Activated CD4-positive, alpha-beta T cell treated with anti-CD3 and anti-CD28 coated beads for 36 hours (primary cell): ENCODE measurements at regions of chr16 and their contacts with region 1.

Region 1: DNA sequence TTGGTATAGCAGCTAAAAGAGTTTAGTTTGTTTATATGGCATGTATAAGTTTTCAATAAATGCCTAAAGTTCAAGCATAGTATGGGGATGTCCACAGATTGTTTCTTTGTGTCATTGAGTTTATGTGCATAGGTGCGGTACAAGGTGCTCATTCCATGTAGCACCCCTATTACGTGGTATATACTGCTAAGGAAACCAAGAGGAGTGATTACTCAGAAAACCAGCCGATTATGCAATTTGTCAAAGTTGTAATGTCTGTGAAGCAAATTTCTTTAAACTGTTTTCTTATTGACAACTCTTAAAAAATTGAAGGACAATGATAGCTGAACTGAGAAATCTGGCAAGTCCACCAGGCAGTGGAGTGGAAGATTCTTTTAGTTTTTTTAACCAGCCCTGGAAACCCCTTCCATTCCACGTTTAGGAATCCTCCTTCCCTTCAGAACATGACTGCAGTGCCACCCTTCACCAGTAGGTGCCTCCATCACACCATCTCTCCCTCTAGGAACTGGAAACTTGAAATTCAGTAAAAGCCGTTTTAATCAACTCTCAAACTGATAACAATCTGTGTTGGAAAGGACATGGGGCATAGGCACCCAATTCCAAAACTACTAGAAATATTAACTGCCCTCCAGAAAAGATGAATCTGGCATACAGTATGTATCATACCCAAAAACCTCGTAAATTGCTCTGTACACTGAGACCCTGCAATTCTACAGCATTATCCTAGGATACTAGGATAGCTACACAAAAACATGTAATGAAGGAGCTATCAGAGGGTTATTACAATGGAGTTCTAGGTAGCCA is 43.5 kb downstream of the REXO5 start:
- DNase-seq: peak; percentile 78
- ATAC-seq: peak; percentile 57
- H3K4me3 Mint-ChIP-seq: no peak overlapping the region
- H3K27ac Mint-ChIP-seq: no peak overlapping the region
- H3K4me1 Mint-ChIP-seq: peaks cover 13% of the 10 kb centered on the region
- H3K27me3 Mint-ChIP-seq: no peaks in the 10 kb centered on the region

Region 2: GRCh38 chr16:20866145-20866772 is 16.5 kb after region 1 on chr16:
- CTCF ChIA-PET with region 1: interaction called, 16 read pairs
- POLR2A ChIA-PET with region 1: no interaction called
- intact Hi-C with region 1: no loop called
- DNase-seq: peak; percentile 38
- ATAC-seq: peak; percentile 74
- H3K4me3 Mint-ChIP-seq: no peak overlapping the region
- H3K27ac Mint-ChIP-seq: peak overlapping the region; percentile 61
- H3K4me1 Mint-ChIP-seq: peaks cover 17% of the 10 kb centered on the region
- H3K27me3 Mint-ChIP-seq: no peaks in the 10 kb centered on the region

Region 3: DNA sequence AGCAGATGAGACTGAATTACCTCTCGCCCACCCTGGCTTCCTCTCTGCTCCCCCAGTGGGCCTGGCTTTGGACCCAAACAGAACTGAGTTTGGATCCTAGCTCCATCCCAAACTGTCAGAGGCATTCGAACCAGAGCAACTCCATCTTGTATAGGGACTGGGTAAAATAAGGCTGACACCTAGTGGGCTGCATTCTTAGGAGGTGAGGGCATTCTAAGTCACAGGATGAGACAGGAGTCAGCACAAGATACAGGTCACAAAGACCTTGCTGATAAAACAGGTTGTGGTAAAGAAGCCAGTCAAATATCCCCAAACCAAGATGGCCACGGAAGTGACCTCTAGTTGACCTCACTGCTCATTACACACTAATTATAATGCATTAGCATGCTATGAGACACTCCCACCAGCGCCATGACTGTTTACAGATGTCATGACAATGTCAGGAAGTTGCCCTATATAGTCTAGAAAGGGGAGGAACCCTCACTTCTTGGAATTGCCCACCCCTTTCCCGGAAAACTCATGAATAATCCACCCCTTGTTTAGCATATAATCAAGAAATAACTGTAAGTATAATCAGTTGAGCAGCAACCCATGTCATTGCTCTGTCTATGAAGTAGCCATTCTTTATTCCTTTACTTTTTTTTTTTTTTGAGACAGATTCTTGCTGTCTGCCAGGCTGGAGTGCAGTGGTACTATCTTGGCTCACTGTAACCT is 95.2 kb after region 1 on chr16:
- CTCF ChIA-PET with region 1: interaction called, 8 read pairs
- POLR2A ChIA-PET with region 1: no interaction called
- intact Hi-C with region 1: loop called (anchors 1 kb)
- DNase-seq: peak; percentile 78
- ATAC-seq: peak; percentile 78
- H3K4me3 Mint-ChIP-seq: no peak overlapping the region
- H3K27ac Mint-ChIP-seq: peak overlapping the region; percentile 55
- H3K4me1 Mint-ChIP-seq: peaks cover 33% of the 10 kb centered on the region
- H3K27me3 Mint-ChIP-seq: no peaks in the 10 kb centered on the region

Region 4: GRCh38 chr16:21001262-21001661 is 151.5 kb after region 1 on chr16:
- CTCF ChIA-PET with region 1: interaction called, 11 read pairs
- POLR2A ChIA-PET with region 1: no interaction called
- intact Hi-C with region 1: loop called (anchors 1 to 5 kb)
- DNase-seq: peak; percentile 62
- ATAC-seq: no peak
- H3K4me3 Mint-ChIP-seq: no peak overlapping the region
- H3K27ac Mint-ChIP-seq: no peak overlapping the region
- H3K4me1 Mint-ChIP-seq: no peaks in the 10 kb centered on the region
- H3K27me3 Mint-ChIP-seq: peaks cover 7% of the 10 kb centered on the region

Region 5: DNA sequence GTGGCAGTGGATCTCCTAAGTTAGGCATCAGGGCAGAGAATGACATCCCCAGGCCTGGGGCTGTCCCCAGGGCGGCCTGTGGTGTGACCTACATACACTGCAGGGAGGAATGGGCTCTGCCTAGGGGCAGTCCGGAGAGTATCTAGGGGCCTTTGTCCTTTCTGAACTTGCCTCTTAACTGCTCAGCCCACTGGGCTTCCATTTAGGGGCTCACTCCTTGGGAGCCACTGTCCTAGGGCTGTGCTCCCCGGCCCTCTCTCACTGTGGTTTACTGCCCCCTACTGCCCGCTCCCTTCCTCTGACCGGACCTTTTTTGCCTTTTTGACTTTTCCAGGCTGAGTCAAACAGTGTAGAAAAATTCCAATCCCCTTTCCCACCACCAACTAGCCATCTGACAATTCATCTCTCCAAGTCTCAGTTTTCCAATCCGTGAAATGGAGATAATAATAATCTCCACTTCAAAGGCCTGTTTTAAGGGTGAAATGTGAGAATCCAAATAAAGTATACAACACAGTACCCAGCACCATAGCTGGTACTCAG is 234.0 kb after region 1 on chr16:
- CTCF ChIA-PET with region 1: interaction called, 15 read pairs
- POLR2A ChIA-PET with region 1: no interaction called
- intact Hi-C with region 1: loop called (anchors 1 kb)
- DNase-seq: peak; percentile 75
- ATAC-seq: peak; percentile 63
- H3K4me3 Mint-ChIP-seq: no peak overlapping the region
- H3K27ac Mint-ChIP-seq: no peak overlapping the region
- H3K4me1 Mint-ChIP-seq: no peaks in the 10 kb centered on the region
- H3K27me3 Mint-ChIP-seq: peaks cover 3% of the 10 kb centered on the region

Region 6: DNA sequence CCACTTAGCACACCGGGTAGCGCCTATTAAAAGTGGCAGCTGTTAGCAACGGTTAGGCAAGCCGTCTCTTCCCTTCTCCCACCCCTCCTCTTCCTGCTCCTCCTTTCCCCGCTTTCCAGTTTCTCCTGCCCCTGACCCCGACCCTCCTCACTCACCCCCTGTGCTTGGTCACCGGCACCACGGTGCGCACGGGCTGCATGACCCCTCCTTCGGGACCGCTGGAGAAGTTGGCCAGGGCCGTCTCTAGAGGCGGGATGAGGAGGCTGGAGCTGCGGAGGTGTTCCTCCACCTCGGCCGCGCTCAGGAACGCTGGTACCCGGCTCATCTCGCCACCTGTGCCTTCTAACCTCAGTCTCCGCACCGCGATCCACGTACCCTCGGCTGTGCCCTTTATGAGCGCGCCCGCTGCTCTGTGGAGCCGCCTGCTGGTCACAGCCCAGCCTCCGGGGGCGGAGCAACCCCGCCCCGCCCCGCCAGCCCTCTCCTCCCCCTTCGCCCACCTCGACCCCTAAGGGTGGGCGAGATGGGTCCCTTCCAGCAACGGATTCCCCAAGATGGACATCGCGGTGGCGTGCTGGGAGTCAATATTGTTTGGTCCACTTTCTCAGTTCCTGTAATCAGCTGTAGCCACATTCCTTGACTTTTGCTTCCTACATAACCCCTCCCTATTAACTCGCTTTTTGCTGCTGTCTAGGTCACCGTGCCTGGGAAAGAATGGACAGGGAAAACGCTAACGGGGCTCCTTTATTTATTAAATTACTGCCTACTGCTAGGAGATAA is 428.3 kb after region 1 on chr16 and contains the start of gene CRYM:
- CTCF ChIA-PET with region 1: interaction called, 3 read pairs
- POLR2A ChIA-PET with region 1: no interaction called
- intact Hi-C with region 1: loop called in 1 of 2 experiments (anchors 10 kb)
- DNase-seq: peak; percentile 80
- ATAC-seq: peak; percentile 96
- H3K4me3 Mint-ChIP-seq: no peak within 1 kb of the TSS
- H3K27ac Mint-ChIP-seq: no peak within 1 kb of the TSS
- H3K4me1 Mint-ChIP-seq: no peaks in the 10 kb centered on the region
- H3K27me3 Mint-ChIP-seq: peaks cover 61% of the 10 kb centered on the region
- total RNA-seq, gene CRYM: not detected